ENCODE measurements at regions of chr9 and their contacts with region 1.

Region 1: DNA sequence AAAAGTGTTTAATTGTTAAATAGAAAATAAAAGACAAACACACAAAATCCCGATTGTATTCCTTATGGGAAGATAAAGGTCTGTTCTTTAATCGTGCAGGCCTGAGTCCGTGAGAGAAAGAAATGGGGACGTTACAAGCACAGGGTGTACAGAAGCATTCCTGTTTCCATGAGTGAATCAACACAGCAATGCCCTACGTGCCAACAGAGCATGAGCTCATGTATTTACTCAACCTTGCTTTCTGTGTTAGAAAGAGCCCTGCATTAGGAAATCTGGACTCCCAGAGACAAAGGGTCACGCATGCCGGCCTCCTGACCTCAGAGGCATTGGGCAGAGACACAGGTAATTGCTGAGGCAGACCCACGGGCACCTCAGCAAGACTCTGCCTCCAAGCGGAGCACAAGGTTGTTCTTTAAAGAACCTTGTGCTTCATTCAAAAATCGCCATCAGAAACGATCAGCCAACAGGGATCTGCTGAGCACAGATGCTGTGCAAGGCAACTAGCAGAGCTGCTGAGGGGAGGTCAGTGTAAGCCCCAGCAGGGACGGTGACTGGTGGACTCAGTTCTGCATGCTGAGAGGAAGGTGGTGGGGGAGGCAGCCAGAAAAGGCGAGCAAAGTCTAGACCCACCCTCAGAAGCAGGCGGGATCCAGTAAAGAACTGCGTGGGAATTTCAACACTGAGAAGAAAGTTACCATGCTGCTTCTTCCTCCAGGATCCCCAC is 101.0 kb downstream of the TLE1 start:
- DNase-seq: no peak
- ATAC-seq: no peak
- H3K4me3 ChIP-seq: no peak overlapping the region
- H3K4me3 Mint-ChIP-seq: no peak overlapping the region
- H3K27ac ChIP-seq: no peak overlapping the region
- H3K27ac Mint-ChIP-seq: no peak overlapping the region
- H3K4me1 ChIP-seq: no peaks in the 10 kb centered on the region
- H3K4me1 Mint-ChIP-seq: no peaks in the 10 kb centered on the region
- H3K27me3 ChIP-seq: no peaks in the 10 kb centered on the region
- H3K27me3 Mint-ChIP-seq: no peaks in the 10 kb centered on the region

Region 2: GRCh38 chr9:81384918-81385317 is 203.4 kb before region 1 on chr9:
- CTCF ChIA-PET with region 1: interaction called in 1 of 2 experiments, 4 read pairs
- POLR2A ChIA-PET with region 1: interaction called in 1 of 2 experiments, 13 read pairs
- DNase-seq: no peak
- ATAC-seq: no peak
- H3K4me3 ChIP-seq: no peak overlapping the region
- H3K4me3 Mint-ChIP-seq: no peak overlapping the region
- H3K27ac ChIP-seq: no peak overlapping the region
- H3K27ac Mint-ChIP-seq: no peak overlapping the region
- H3K4me1 ChIP-seq: no peaks in the 10 kb centered on the region
- H3K4me1 Mint-ChIP-seq: no peaks in the 10 kb centered on the region
- H3K27me3 ChIP-seq: no peaks in the 10 kb centered on the region
- H3K27me3 Mint-ChIP-seq: peaks cover 0 to 7% of the 10 kb centered on the region in 2 donors

Region 3: DNA sequence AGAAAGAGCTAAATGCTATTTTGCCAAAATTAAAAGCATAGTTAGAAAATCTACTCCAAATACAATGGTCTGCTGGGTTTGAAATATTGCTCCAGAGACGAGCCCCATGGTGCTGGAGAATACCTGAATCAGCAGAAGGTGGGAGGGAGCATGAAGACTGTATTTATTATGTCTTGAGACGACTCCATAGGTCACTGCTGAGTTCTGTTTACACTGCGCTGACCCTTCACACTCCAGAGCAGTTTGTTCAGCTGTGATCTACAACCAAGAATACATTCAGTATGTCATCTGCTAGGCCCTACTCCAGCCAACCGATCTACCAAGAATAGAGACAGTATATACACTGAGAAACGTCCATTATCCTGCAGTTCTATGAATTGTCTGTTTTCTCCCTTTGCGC is 49.4 kb before region 1 on chr9:
- CTCF ChIA-PET with region 1: no interaction called
- POLR2A ChIA-PET with region 1: interaction called in 1 of 2 experiments, 10 read pairs
- DNase-seq: no peak
- ATAC-seq: no peak
- H3K4me3 ChIP-seq: no peak overlapping the region
- H3K4me3 Mint-ChIP-seq: no peak overlapping the region
- H3K27ac ChIP-seq: no peak overlapping the region
- H3K27ac Mint-ChIP-seq: no peak overlapping the region
- H3K4me1 ChIP-seq: no peaks in the 10 kb centered on the region
- H3K4me1 Mint-ChIP-seq: no peaks in the 10 kb centered on the region
- H3K27me3 ChIP-seq: no peaks in the 10 kb centered on the region
- H3K27me3 Mint-ChIP-seq: no peaks in the 10 kb centered on the region

Region 4: DNA sequence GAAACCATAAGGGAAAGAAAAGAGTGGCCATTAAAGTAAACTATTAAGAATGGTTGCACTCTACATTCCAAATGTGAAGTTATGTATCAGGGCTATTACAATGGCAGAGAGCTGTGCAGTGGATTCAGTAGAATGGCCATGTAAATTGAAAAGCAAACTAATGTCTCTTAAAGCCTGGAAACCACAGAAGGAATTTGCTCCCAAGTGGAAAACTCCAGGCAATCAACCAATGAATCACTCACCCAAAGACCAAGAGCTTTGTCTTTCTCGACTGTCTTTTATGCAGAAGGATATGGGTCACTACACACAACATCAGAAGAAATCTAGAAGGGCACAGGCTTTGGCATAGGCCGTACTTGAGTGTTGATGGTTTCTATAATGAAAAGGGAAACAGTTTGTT is 13.9 kb before region 1 on chr9:
- CTCF ChIA-PET with region 1: no interaction called
- POLR2A ChIA-PET with region 1: no interaction called
- DNase-seq: no peak
- ATAC-seq: no peak
- H3K4me3 ChIP-seq: no peak overlapping the region
- H3K4me3 Mint-ChIP-seq: no peak overlapping the region
- H3K27ac ChIP-seq: no peak overlapping the region
- H3K27ac Mint-ChIP-seq: no peak overlapping the region
- H3K4me1 ChIP-seq: no peaks in the 10 kb centered on the region
- H3K4me1 Mint-ChIP-seq: no peaks in the 10 kb centered on the region
- H3K27me3 ChIP-seq: no peaks in the 10 kb centered on the region
- H3K27me3 Mint-ChIP-seq: no peaks in the 10 kb centered on the region

Region 5: DNA sequence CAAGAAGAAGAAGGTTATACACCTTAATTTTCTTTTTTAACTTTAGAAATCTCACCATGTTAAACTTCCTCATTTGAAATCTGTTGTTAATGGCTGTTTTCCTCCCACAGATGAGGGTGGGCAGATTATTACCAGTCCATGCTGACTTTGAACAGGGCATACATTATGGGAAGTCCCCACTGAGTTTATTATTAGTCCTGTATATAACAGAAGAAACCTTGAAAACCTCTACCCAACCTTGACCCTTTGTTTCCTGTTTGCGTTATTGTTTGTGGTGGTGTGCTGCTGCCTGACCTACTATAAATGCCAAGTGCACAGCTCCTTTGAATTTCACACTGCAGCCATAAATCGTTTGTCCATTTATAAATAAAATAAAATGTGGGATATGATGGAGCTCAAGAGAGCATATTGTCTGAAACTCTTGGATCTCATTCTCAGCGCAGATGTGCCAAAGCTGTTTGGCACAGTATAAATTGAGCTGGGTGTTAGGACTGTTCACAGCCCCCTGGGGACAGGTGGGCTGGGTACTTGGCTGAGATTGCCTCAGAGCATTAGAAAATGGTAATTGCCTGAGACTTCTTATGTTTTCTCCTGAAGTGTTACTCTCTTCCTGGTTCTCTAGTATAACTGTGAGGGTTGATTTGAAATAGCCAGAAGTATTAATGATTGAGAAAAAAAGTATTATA is 539.8 kb after region 1 on chr9:
- CTCF ChIA-PET with region 1: no interaction called
- POLR2A ChIA-PET with region 1: no interaction called
- DNase-seq: no peak
- ATAC-seq: no peak
- H3K4me3 ChIP-seq: no peak overlapping the region
- H3K4me3 Mint-ChIP-seq: no peak overlapping the region
- H3K27ac ChIP-seq: no peak overlapping the region
- H3K27ac Mint-ChIP-seq: no peak overlapping the region
- H3K4me1 ChIP-seq: no peaks in the 10 kb centered on the region
- H3K4me1 Mint-ChIP-seq: no peaks in the 10 kb centered on the region
- H3K27me3 ChIP-seq: no peaks in the 10 kb centered on the region
- H3K27me3 Mint-ChIP-seq: no peaks in the 10 kb centered on the region

Measured in T-cell (primary cell).